Activated CD4-positive, alpha-beta memory T cell treated with anti-CD3 and anti-CD28 coated beads for 36 hours (primary cell): ENCODE measurements at regions of chr10 and their contacts with region 1.

Region 1: DNA sequence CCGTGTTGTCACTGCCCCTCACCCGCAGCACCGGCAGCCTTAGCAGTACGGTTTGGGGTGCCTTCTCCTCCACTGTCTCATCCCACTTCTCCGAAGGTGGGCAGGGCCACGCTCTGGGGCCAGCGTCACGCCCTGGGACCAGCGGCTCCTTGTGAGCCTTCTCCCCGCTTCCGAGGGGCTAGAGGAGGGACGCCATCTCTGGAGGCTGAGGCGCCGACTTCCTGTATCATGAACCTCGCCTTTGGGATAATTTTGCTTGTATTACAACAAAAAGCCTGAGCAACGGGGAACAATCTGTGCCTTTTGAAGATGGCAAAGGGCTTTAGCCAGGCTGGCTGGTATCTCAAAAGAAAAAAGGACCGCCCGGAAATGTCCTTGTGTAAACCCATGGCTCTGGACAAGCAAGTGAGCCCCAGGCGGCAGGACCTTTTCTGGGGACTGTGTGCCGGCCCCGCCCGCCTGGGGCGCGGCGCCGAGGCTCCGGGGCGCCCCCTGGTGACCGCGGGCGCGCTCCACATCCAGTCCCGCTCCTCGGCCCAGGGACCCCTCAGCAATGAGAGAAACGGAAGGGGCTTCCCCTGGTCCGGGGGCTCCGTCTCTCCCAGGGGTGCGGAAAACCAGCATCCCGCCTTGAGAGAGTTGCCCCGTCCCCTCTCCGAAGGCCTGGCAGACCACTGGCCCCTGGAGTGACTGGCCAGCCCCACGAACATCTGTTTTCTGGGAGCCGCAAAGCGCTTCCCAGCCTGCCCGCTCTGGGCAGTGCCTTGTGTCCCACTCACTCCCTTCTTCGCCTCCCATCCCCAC is 3.8 kb downstream of the DEPP1 start:
- DNase-seq: peak; percentile 74
- H3K4me3 Mint-ChIP-seq: peak overlapping the region; percentile 68
- H3K27ac Mint-ChIP-seq: no peak overlapping the region
- H3K4me1 Mint-ChIP-seq: peaks cover 2% of the 10 kb centered on the region
- H3K27me3 Mint-ChIP-seq: no peaks in the 10 kb centered on the region

Region 2: GRCh38 chr10:44725404-44725803 is 249.4 kb before region 1 on chr10:
- CTCF ChIA-PET with region 1: no interaction called
- POLR2A ChIA-PET with region 1: no interaction called
- intact Hi-C with region 1: no loop called
- DNase-seq: no peak
- H3K4me3 Mint-ChIP-seq: no peak overlapping the region
- H3K27ac Mint-ChIP-seq: no peak overlapping the region
- H3K4me1 Mint-ChIP-seq: no peaks in the 10 kb centered on the region
- H3K27me3 Mint-ChIP-seq: no peaks in the 10 kb centered on the region

Region 3: DNA sequence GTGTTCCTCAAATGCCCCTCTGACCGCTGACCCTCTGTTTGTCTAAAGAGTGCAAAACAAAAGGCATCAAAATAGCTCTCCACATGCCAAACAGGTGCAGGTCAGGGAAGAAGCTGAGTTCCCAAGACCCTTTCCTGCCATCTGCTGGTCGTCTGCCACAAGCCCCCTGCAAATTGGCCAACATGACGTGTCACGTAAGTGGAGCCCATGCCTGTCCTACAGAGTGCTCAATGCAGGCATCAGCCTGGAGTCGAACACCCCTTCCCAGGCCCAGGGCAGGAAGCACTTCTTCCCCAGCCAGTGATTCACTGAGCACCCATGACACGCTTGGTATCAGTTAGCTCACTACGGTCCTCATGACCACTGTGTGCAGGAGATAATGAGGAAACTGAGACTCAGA is 49.6 kb before region 1 on chr10:
- CTCF ChIA-PET with region 1: no interaction called
- POLR2A ChIA-PET with region 1: no interaction called
- intact Hi-C with region 1: no loop called
- DNase-seq: no peak
- H3K4me3 Mint-ChIP-seq: no peak overlapping the region
- H3K27ac Mint-ChIP-seq: no peak overlapping the region
- H3K4me1 Mint-ChIP-seq: no peaks in the 10 kb centered on the region
- H3K27me3 Mint-ChIP-seq: no peaks in the 10 kb centered on the region

Region 4: GRCh38 chr10:44959247-44960087 is 15.4 kb before region 1 on chr10 and contains the start of gene RASSF4:
- CTCF ChIA-PET with region 1: interaction called, 8 read pairs
- POLR2A ChIA-PET with region 1: no interaction called
- intact Hi-C with region 1: loop called (anchors 1 kb)
- DNase-seq: peak; percentile 94
- H3K4me3 Mint-ChIP-seq: peak within 1 kb of the TSS; percentile 82
- H3K27ac Mint-ChIP-seq: peak within 1 kb of the TSS; percentile 42
- H3K4me1 Mint-ChIP-seq: peaks cover 14% of the 10 kb centered on the region
- H3K27me3 Mint-ChIP-seq: no peaks in the 10 kb centered on the region
- total RNA-seq, gene RASSF4: 0.77 to 1.1 TPM

Region 5: DNA sequence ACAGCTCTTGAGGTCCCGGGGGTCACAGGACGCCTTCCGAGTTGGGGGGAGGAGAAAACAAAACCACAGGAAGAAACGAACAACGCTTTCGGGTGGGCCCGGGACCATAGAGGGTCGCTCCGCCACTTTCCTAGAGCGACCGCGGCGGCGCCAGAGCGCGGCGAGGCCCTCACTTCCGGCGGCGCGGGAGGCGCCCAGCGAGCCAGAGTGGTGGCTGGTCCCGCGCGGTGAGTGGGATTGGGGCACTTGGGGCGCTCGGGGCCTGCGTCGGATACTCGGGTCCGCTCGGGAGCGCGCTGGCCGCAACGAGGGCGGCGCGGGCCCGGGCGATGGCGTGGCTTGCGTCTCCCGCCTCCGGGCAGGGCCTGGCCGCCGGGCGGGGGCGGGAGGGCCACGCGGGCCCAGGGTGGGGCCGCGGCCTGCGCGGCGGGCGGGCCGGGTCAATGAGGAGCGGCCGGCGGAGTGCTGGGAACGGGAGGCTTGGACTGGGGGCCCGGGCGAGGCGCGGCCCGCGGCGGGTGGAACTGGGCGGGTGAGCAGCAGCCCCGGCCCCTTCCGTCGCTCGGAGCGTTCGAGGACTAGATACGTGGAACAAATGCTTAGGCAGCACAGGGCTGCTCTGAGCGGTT is 26.0 kb after region 1 on chr10 and contains the start of gene ZNF22:
- CTCF ChIA-PET with region 1: interaction called, 4 read pairs
- POLR2A ChIA-PET with region 1: no interaction called
- intact Hi-C with region 1: loop called (anchors 1 kb)
- DNase-seq: peak; percentile 69
- H3K4me3 Mint-ChIP-seq: peak within 1 kb of the TSS; percentile 87
- H3K27ac Mint-ChIP-seq: peak within 1 kb of the TSS; percentile 85
- H3K4me1 Mint-ChIP-seq: peaks cover 32% of the 10 kb centered on the region
- H3K27me3 Mint-ChIP-seq: no peaks in the 10 kb centered on the region
- total RNA-seq, gene ZNF22: 19.3 to 19.9 TPM